ENCODE measurements at regions of chr14 and their contacts with region 1.

Region 1: DNA sequence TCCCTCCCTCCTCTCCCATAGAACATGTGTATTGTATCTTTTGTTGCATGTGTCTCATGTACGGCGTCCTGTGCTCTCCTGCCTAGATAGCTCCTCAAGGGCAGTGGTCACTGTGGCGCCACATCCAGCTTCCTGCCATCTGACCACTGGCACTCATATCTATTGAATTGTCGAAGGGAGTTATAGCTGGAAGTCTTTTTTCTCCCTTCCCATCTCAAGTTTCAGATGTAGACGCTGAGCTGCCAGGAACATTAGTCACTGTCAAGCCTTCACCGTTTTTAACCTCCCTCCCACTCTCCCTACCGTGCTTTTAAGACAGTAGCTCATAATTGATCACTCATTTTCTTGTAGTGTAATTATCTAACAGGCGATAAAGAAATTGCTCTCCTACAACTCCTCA is 33.0 kb downstream of the MTHFD1 start:
- DNase-seq: no peak
- H3K4me3 Mint-ChIP-seq: no peak overlapping the region
- H3K27ac Mint-ChIP-seq: peak overlapping the region; percentile 72
- H3K4me1 Mint-ChIP-seq: peaks cover 52% of the 10 kb centered on the region
- H3K27me3 Mint-ChIP-seq: no peaks in the 10 kb centered on the region

Region 2: GRCh38 chr14:64232095-64232838 is 188.9 kb before region 1 on chr14:
- intact Hi-C with region 1: loop called (anchors 2 kb)
- DNase-seq: no peak
- H3K4me3 Mint-ChIP-seq: no peak overlapping the region
- H3K27ac Mint-ChIP-seq: peak overlapping the region; percentile 78
- H3K4me1 Mint-ChIP-seq: peaks cover 25% of the 10 kb centered on the region
- H3K27me3 Mint-ChIP-seq: peaks cover 15% of the 10 kb centered on the region

Region 3: GRCh38 chr14:64387694-64388532 is 33.3 kb before region 1 on chr14 and contains the start of gene MTHFD1:
- intact Hi-C with region 1: loop called (anchors 1 kb)
- DNase-seq: peak; percentile 97
- H3K4me3 Mint-ChIP-seq: peak within 1 kb of the TSS; percentile 86
- H3K27ac Mint-ChIP-seq: peak within 1 kb of the TSS; percentile 92
- H3K4me1 Mint-ChIP-seq: peaks cover 33% of the 10 kb centered on the region
- H3K27me3 Mint-ChIP-seq: no peaks in the 10 kb centered on the region
- total RNA-seq, gene MTHFD1: 291 and 309 TPM in 2 replicates

Region 4: DNA sequence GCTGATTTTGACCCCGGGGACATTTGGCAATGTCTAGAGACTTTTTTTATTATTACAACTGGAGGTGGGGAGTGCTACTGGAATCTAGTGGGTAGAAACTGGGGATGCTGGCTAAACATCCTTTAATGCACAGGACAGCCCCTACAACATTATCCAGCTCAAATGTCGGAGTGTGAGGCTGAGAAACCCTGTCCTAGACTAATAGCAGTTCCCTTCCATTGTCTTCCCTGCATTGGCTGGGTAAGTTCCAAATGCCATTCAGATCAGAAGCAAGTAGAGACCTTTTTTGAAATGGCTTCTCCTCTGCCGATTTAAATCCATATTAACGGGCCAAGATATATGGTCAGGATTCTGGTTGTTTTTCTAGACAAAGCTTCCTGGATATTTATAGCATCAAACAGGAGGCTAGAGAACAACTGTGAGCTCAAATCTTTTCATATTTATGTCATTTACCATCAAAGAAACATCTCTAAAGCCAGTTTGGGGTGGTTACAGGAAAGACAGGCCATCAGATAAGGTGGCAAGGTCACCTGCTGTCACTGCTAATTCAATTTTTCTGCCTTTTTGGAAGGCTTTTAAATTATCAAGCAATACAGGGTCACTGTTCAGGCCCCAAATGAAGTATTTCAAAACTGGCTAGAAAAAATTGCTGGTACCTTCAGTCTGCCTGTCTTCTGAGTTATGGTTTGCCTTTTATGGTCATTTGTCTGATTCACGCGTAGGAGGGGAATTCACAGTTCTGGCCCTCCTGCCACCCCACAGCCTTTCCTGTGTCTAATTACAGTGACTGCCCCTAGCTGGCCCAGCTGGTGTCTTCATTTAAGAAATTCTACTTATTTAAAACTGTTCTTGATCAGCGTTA is 24.0 kb after region 1 on chr14:
- intact Hi-C with region 1: loop called (anchors 1 kb)
- DNase-seq: no peak
- H3K4me3 Mint-ChIP-seq: peak overlapping the region; percentile 14
- H3K27ac Mint-ChIP-seq: peak overlapping the region; percentile 81
- H3K4me1 Mint-ChIP-seq: peaks cover 29% of the 10 kb centered on the region
- H3K27me3 Mint-ChIP-seq: no peaks in the 10 kb centered on the region